ENCODE measurements at regions of chr17 and their contacts with region 1.

Region 1: GRCh38 chr17:55513885-55514591 is 2.8 kb upstream of the SMIM36 start:
- DNase-seq: peak; percentile 96
- ATAC-seq: peak; percentile 81
- H3K4me3 ChIP-seq: no peak overlapping the region
- H3K27ac ChIP-seq: no peak overlapping the region
- H3K4me1 ChIP-seq: no peaks in the 10 kb centered on the region
- H3K27me3 ChIP-seq: peaks cover 15% of the 10 kb centered on the region
- CTCF ChIP-seq: peak; percentile 99

Region 2: DNA sequence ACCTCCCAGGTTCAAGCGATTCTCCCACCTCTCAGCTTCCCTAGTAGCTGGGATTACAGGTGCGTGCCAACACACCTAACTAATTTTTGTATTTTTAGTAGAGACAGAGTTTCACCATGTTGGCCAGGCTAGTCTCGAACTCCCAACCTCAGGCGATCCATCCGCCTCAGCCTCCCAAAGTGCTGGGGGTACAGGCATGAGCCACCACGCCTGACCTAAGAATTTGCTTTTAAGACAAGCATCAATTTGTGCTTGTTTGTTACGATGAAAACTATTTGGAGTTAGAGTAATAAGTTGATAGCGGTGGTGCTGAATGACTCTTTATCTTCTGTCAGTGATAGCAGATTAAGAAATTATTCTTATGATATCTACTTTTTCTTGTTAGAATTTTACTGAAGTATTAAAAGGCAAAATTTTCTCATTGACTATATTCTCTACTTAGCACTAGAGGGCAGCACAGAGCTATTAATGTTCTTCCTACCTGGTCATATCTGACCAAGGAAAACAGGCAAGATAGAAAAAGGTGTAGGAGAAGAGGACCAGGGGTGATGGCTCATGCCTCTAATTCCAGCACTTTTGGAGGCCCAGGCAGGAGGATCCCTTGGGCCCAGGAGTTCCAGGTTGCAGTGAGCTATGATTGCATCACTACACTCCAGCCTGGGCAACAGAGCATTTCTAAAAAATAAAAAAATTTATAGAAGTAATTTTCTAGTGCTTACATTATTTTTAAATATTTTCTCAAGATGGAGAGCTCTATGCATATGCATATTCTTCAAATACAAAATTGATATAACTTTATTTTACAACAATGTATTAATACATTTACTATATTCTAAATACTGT is 521.0 kb before region 1 on chr17:
- CTCF ChIA-PET with region 1: no interaction called
- POLR2A ChIA-PET with region 1: no interaction called
- intact Hi-C with region 1: loop called (anchors 5 kb)
- DNase-seq: peak; percentile 82
- ATAC-seq: peak; percentile 88
- H3K4me3 ChIP-seq: no peak overlapping the region
- H3K27ac ChIP-seq: no peak overlapping the region
- H3K4me1 ChIP-seq: no peaks in the 10 kb centered on the region
- H3K27me3 ChIP-seq: no peaks in the 10 kb centered on the region
- CTCF ChIP-seq: peak; percentile 81

Region 3: GRCh38 chr17:55238179-55238930 is 275.7 kb before region 1 on chr17:
- CTCF ChIA-PET with region 1: no interaction called
- POLR2A ChIA-PET with region 1: no interaction called
- intact Hi-C with region 1: loop called (anchors 10 kb)
- DNase-seq: peak; percentile 85
- ATAC-seq: peak; percentile 85
- H3K4me3 ChIP-seq: peak overlapping the region; percentile 64
- H3K27ac ChIP-seq: no peak overlapping the region
- H3K4me1 ChIP-seq: peaks cover 23% of the 10 kb centered on the region
- H3K27me3 ChIP-seq: peaks cover 3% of the 10 kb centered on the region; the same call in 1 of the 2 replicates
- CTCF ChIP-seq: no peak

Region 4: GRCh38 chr17:55348749-55349354 is 165.2 kb before region 1 on chr17:
- CTCF ChIA-PET with region 1: interaction called, 5 read pairs
- POLR2A ChIA-PET with region 1: no interaction called
- intact Hi-C with region 1: loop called (anchors 2 kb)
- DNase-seq: peak; percentile 72
- ATAC-seq: peak; percentile 83
- H3K4me3 ChIP-seq: no peak overlapping the region
- H3K27ac ChIP-seq: no peak overlapping the region
- H3K4me1 ChIP-seq: no peaks in the 10 kb centered on the region
- H3K27me3 ChIP-seq: no peaks in the 10 kb centered on the region
- CTCF ChIP-seq: peak; percentile 96

Region 5: GRCh38 chr17:55421179-55421934 is 92.7 kb before region 1 on chr17 and contains the start of gene MMD:
- CTCF ChIA-PET with region 1: no interaction called
- POLR2A ChIA-PET with region 1: no interaction called
- intact Hi-C with region 1: loop called (anchors 1 kb)
- DNase-seq: peak; percentile 34
- ATAC-seq: peak; percentile 53
- H3K4me3 ChIP-seq: peak within 1 kb of the TSS; percentile 92
- H3K27ac ChIP-seq: peak within 1 kb of the TSS; percentile 16; the same call in 1 of the 2 replicates
- H3K4me1 ChIP-seq: peaks cover 13% of the 10 kb centered on the region
- H3K27me3 ChIP-seq: peaks cover 14% of the 10 kb centered on the region
- CTCF ChIP-seq: no peak
- total RNA-seq, gene MMD: 10.9 and 24.1 TPM in 2 replicates

Region 6: DNA sequence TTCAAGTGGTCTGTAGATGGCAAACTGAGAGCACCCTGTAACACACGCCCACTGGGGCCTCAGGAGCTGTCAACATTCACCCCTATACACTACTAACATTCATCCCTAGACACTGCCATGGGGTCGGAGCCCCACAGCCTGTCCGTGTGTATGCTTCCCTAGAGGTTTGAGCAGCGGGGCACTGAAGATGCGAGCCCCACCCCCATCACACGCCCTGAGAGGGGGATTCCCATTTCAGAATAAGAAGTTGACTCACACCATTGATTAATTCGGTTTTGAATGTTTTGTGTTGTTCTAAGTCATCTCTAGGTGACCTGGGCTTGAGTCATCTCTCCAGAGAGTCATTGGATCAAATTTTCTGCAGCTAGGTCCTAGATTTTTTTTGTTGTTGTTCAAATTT is 55.1 kb before region 1 on chr17:
- CTCF ChIA-PET with region 1: no interaction called
- POLR2A ChIA-PET with region 1: no interaction called
- intact Hi-C with region 1: loop called (anchors 5 kb)
- DNase-seq: peak; percentile 95
- ATAC-seq: peak; percentile 54
- H3K4me3 ChIP-seq: no peak overlapping the region
- H3K27ac ChIP-seq: peak overlapping the region; percentile 77
- H3K4me1 ChIP-seq: peaks cover 46% of the 10 kb centered on the region
- H3K27me3 ChIP-seq: no peaks in the 10 kb centered on the region
- CTCF ChIP-seq: no peak

Region 7: DNA sequence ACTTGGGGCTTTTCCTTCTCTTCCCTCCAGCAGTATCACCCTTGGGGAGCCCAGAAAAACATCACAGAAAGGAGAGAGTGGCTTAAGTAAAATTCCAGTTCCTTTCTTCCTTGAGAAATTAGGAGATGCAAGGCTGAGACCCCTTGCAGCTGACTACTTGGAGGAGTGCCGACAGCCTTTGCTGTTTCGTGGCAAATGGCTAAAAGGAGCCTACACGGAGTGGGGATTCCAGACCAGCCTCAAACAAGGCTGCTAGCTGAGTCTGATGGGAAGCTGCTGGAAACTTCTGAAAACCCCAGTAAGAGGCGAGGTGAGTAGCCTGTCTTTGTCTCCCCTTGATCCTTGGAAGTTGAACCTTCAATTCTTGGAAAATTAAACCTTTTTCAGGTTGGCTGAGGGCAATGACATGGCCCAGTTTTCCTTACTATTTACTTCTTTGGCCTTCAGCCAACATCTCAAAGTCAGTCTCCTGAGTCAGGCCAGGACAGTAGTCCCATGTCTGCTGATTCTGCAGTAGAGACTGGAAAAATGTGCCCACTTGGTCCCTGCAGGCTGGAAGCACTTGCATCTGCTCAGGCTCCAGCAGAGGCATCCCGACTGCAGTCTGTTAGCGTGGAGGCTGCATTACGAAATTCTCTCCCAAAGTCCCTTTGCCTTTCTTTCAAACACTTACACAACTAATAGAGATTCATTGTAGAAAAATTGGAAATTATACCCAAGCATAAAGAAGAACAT is 26.2 kb before region 1 on chr17:
- CTCF ChIA-PET with region 1: no interaction called
- POLR2A ChIA-PET with region 1: no interaction called
- intact Hi-C with region 1: no loop called
- DNase-seq: peak; percentile 44
- ATAC-seq: no peak; the same call in none of the 2 replicates
- H3K4me3 ChIP-seq: no peak overlapping the region
- H3K27ac ChIP-seq: no peak overlapping the region
- H3K4me1 ChIP-seq: peaks cover 4% of the 10 kb centered on the region; the same call in 1 of the 2 replicates
- H3K27me3 ChIP-seq: no peaks in the 10 kb centered on the region
- CTCF ChIP-seq: no peak

Measured in PC-3 (cell line).